ENCODE measurements at regions of chr14 and their contacts with region 1.

Region 1: GRCh38 chr14:31902002-31902401 is 175.1 kb upstream of the ARHGAP5 start:
- DNase-seq: no peak
- ATAC-seq: no peak
- H3K4me3 ChIP-seq: no peak overlapping the region
- H3K4me3 Mint-ChIP-seq: no peak overlapping the region
- H3K27ac ChIP-seq: no peak overlapping the region
- H3K27ac Mint-ChIP-seq: no peak overlapping the region
- H3K4me1 ChIP-seq: no peaks in the 10 kb centered on the region
- H3K4me1 Mint-ChIP-seq: no peaks in the 10 kb centered on the region
- H3K27me3 ChIP-seq: no peaks in the 10 kb centered on the region
- H3K27me3 Mint-ChIP-seq: no peaks in the 10 kb centered on the region
- CTCF ChIP-seq: no peak

Region 2: GRCh38 chr14:32345311-32345791 is 443.3 kb after region 1 on chr14:
- CTCF ChIA-PET with region 1: no interaction called
- POLR2A ChIA-PET with region 1: no interaction called
- intact Hi-C with region 1: loop called in 1 of 2 experiments (anchors 5 kb)
- DNase-seq: no peak
- ATAC-seq: no peak
- H3K4me3 ChIP-seq: no peak overlapping the region
- H3K4me3 Mint-ChIP-seq: no peak overlapping the region
- H3K27ac ChIP-seq: no peak overlapping the region
- H3K27ac Mint-ChIP-seq: no peak overlapping the region
- H3K4me1 ChIP-seq: no peaks in the 10 kb centered on the region
- H3K4me1 Mint-ChIP-seq: no peaks in the 10 kb centered on the region
- H3K27me3 ChIP-seq: no peaks in the 10 kb centered on the region
- H3K27me3 Mint-ChIP-seq: no peaks in the 10 kb centered on the region
- CTCF ChIP-seq: no peak

Measured in CD4-positive, alpha-beta T cell (primary cell).